ENCODE measurements at regions of chr3 and their contacts with region 1.

Region 1: GRCh38 chr3:138941259-138941885 is 5.6 kb downstream of the FOXL2 start:
- DNase-seq: peak; percentile 79 to 89 (median 84)
- H3K4me3 ChIP-seq: no peak overlapping the region
- H3K27ac ChIP-seq: peak overlapping the region; percentile 27 to 100
- H3K4me1 ChIP-seq: peaks cover 18% of the 10 kb centered on the region
- H3K27me3 ChIP-seq: no peaks in the 10 kb centered on the region
- CTCF ChIP-seq: peak; percentile 51 to 72 (median 56)
- EP300 ChIP-seq: no peak
- POLR2A ChIP-seq: no peak

Region 2: DNA sequence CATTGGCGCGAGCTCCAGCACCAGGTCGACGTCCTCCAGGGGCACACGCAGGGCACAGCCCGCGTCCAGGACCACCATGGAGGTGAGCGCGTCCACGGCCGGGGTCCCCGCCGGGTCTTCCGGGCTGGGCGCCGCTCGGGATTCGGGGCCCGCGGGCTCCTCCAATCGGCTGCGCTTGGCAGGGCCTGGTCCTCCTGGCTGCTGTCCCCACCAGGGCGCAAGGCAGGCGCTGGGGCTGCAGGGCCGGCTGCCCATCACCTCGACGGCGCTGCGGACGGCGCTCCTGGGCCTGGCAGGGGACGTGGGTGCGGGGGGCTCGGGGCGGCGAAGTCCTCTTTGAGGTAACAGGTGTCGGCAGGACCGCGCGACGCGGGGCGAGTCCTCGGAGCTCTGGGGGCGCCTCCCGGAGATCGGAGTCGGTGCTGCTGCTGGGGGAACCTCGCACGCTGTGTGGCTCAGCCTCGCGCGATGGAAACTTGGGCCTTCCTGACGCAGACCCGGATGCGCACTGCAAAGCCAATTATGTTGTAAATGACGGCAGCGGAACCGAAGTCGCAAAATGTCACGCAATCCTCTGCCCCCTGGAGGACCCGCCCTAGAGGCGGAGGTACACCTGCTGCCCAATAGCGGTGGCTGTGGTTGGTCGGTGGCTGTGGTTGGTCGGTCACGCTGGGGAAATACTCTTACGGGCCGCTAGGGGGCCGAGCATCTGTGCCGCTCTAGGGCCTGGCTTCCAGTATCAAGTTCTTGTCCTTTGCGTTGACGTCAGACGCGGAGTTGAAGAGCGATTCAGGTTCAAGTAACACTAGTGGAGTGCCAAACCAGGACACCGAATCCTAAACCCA is 103.2 kb after region 1 on chr3 and contains the start of gene PRR23C:
- intact Hi-C with region 1: no loop called
- DNase-seq: no peak
- H3K4me3 ChIP-seq: no peak within 1 kb of the TSS
- H3K27ac ChIP-seq: no peak within 1 kb of the TSS
- H3K4me1 ChIP-seq: no peaks in the 10 kb centered on the region
- H3K27me3 ChIP-seq: no peaks in the 10 kb centered on the region
- CTCF ChIP-seq: no peak
- EP300 ChIP-seq: no peak
- POLR2A ChIP-seq: no peak
- total RNA-seq, gene PRR23C: not detected

Region 3: GRCh38 chr3:139111392-139112229 is 170.2 kb after region 1 on chr3:
- intact Hi-C with region 1: loop called in 2 of 4 experiments (anchors 5 to 10 kb)
- DNase-seq: peak; percentile 80 to 89 (median 87)
- H3K4me3 ChIP-seq: no peak overlapping the region
- H3K27ac ChIP-seq: no peak overlapping the region
- H3K4me1 ChIP-seq: peaks cover 5% of the 10 kb centered on the region
- H3K27me3 ChIP-seq: no peaks in the 10 kb centered on the region
- CTCF ChIP-seq: peak in 2 of 3 donors; percentile 72 to 74
- EP300 ChIP-seq: no peak
- POLR2A ChIP-seq: no peak

Region 4: DNA sequence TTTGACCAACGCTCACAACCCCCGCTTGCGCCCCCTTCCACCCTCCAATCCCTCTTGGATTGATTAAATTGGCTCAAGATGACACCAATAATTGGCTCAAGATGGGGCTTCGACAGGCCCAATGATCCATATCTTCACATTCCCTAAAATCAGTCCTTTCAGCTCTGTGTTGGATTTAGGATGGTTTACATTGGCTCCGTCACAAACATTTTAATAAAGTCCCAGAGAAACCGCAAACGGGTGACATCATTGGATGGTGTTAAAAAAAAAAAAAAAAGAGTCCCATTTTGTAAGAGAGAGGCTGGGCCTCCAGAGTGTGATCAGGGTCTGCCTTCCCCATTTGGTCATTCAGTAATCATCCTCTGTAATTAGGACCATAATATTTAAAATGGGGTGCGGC is 289.0 kb after region 1 on chr3:
- intact Hi-C with region 1: loop called in 1 of 4 experiments (anchors 10 kb)
- DNase-seq: no peak
- H3K4me3 ChIP-seq: no peak overlapping the region
- H3K27ac ChIP-seq: no peak overlapping the region
- H3K4me1 ChIP-seq: peaks cover 25% of the 10 kb centered on the region
- H3K27me3 ChIP-seq: no peaks in the 10 kb centered on the region
- CTCF ChIP-seq: no peak
- EP300 ChIP-seq: no peak
- POLR2A ChIP-seq: no peak

Region 5: DNA sequence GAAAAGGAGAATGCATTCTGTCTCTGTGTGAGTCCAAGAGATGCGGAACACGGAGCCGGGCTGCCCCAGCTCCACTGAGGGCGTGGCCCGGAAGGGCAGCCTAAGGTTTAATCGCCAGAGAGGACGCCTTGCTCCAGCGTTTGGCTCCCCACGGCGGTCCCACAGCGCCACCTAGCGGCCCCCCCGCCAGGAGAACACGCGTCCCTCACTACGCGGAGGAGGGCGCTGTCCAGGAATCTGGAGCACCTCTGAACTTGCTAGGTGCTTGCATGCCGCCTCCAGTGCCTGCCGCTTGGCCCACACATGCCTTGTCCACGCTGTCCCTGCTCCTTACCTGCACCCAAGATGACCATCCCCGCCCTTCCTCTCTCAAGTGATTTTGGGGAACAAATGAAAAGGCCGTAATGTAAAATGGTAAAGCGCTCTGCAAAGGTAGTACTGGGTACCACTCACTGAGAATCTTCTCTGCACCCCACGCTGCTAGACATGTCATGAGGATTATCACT is 388.0 kb after region 1 on chr3:
- intact Hi-C with region 1: loop called in 3 of 4 experiments (anchors 5 to 10 kb)
- DNase-seq: peak; percentile 89 to 96 (median 94)
- H3K4me3 ChIP-seq: no peak overlapping the region
- H3K27ac ChIP-seq: no peak overlapping the region
- H3K4me1 ChIP-seq: no peaks in the 10 kb centered on the region
- H3K27me3 ChIP-seq: no peaks in the 10 kb centered on the region
- CTCF ChIP-seq: peak; percentile 98 to 99 (median 99)
- EP300 ChIP-seq: no peak
- POLR2A ChIP-seq: no peak

Measured in ovary (tissue), 10 donors.